ENCODE measurements at regions of chr10 and their contacts with region 1.

Region 1: DNA sequence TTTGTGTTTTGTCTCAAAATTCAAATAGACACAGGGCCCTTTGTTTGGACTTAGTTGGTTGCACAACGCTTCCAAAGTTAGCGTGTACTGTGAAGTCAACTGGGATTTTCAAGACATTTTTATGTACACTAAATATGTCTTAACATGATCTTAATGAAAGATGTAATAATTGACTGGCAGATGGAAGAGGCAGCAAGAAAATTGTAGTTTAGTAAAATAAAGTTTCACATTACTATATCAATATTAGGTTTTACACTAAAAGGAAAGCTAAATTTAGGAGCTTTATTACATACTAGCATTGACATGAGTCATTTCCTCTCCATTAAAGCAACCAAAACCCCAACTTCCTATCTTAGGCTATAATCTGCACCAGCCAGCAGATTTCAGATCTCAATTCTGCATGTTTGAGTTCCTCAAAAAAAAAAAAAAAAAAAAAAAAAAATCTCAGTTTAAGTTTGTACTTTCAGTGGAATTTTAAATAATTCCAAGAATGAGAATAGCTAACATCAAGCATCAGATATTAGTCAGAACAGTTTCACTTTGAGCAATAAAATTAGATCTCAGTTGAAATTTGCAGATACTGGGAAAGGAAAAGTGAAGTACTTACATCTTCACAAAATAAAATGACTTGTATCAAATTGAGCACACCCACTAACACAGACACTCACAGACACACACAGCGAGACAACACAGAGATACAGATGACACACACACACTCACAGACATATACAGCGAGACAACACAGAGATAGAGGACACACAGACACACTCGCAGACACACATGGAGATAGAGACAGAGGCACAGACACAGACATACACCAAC is 346.6 kb upstream of the KLF6 start:
- DNase-seq: peak; percentile 86
- H3K4me3 ChIP-seq: peak overlapping the region in 1 of 3 experiments; percentile 47
- H3K27ac ChIP-seq: peak overlapping the region; percentile 92
- H3K4me1 ChIP-seq: peaks cover 48% of the 10 kb centered on the region
- H3K27me3 ChIP-seq: no peaks in the 10 kb centered on the region
- CTCF ChIP-seq: no peak
- POLR2A ChIP-seq: no peak

Region 2: DNA sequence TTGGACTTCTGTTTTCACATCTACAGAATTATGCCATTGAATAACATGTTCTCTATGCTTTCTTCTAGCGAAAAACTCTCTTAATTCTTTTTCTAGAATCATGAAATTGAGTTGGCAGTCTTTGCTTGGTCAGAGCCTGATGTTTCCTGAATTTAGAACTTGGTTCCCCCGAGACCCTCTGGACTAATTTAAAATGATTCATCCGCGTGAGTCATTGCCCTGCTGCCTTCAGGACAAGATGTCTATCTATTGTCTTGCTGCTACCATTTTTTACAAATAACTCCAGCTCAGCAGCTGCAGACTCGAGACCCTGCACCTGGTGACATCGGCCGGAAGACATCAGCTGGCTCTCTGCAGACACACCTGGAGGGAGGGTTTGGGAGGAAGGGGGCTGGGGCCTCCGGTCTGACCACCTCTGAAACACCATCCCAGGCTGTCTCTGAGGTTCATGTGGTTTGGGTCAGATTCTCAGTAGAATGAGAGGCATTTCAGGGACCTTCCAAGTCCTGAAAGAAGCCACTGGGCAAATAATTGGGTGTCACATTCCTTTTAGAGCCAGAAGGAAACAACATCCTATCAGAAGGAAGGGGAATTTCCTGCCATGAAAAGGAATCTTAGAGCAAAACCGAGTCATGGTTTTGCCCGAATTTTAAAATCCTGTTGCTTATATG is 325.7 kb before region 1 on chr10:
- CTCF ChIA-PET with region 1: no interaction called
- POLR2A ChIA-PET with region 1: interaction called, 4 read pairs
- dilution Hi-C with region 1: no loop called
- intact Hi-C with region 1: loop called (anchors 1 kb)
- DNase-seq: peak; percentile 96
- H3K4me3 ChIP-seq: peak overlapping the region in 1 of 3 experiments; percentile 31
- H3K27ac ChIP-seq: peak overlapping the region; percentile 100
- H3K4me1 ChIP-seq: peaks cover 70% of the 10 kb centered on the region
- H3K27me3 ChIP-seq: no peaks in the 10 kb centered on the region
- CTCF ChIP-seq: no peak
- POLR2A ChIP-seq: peak; percentile 29

Region 3: DNA sequence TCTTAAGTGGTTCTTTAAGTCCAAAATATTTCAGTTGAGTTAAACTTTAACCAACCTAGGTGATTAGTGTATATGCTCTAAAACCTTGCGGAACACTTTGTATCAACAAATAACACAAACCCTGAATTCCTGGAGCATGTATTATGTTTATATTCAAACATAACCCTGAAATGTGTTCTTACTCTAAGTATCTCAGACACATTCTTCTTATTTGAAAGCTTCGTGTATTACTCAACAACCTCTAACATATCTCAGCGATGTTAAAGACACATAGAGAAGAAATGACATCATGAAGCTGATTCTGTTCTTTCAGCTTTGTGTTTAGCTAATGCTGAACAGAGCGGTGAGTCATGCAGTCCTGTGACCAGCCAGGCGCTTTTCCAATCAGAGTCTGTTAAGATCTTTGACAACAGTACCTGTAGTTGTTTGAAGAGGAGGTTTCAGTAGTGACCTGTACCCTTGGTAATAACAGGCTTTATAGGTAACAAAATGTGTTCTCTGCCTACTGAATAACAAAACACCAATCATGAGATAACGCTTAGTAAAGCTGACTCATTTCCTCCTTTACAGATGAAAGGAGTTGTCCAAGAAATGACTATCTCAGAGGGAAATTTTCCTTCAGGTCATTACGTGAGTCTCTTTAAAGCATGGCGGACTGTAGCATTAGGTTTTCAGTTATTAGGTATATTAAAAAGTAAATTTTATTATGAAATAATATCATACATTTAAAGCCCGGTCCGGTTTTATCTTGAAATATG is 279.3 kb before region 1 on chr10:
- CTCF ChIA-PET with region 1: no interaction called
- POLR2A ChIA-PET with region 1: no interaction called
- dilution Hi-C with region 1: no loop called
- intact Hi-C with region 1: loop called (anchors 5 kb)
- DNase-seq: peak; percentile 98
- H3K4me3 ChIP-seq: no peak overlapping the region
- H3K27ac ChIP-seq: peak overlapping the region; percentile 93
- H3K4me1 ChIP-seq: peaks cover 23% of the 10 kb centered on the region
- H3K27me3 ChIP-seq: no peaks in the 10 kb centered on the region
- CTCF ChIP-seq: no peak
- POLR2A ChIP-seq: no peak

Region 4: DNA sequence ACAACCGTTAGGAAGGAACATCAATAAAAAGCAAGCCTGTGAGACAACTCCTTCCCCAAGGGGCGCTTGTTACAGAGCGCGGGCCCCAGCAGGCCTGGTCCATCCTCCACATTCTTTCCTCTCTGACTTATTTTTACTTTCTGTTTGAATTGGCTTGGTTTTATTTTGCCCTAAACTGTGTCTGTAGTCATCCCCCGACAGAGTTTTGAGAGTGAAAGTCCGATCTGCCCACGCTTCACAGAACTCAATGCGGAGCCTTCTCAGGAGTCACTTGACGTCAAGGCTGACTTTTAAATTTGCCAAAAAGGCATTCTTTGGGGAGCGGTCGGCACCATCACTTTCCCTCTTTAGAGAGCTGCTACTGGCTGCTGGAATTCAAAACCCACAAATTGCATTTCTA is 196.5 kb before region 1 on chr10:
- CTCF ChIA-PET with region 1: no interaction called
- POLR2A ChIA-PET with region 1: no interaction called
- dilution Hi-C with region 1: no loop called
- intact Hi-C with region 1: loop called (anchors 5 kb)
- DNase-seq: peak; percentile 26
- H3K4me3 ChIP-seq: no peak overlapping the region
- H3K27ac ChIP-seq: peak overlapping the region; percentile 75
- H3K4me1 ChIP-seq: peaks cover 24% of the 10 kb centered on the region
- H3K27me3 ChIP-seq: no peaks in the 10 kb centered on the region
- CTCF ChIP-seq: no peak
- POLR2A ChIP-seq: no peak

Region 5: GRCh38 chr10:4081685-4082111 is 49.9 kb before region 1 on chr10:
- CTCF ChIA-PET with region 1: interaction called, 3 read pairs
- POLR2A ChIA-PET with region 1: no interaction called
- dilution Hi-C with region 1: no loop called
- intact Hi-C with region 1: loop called (anchors 1 kb)
- DNase-seq: no peak
- H3K4me3 ChIP-seq: no peak overlapping the region
- H3K27ac ChIP-seq: peak overlapping the region; percentile 35
- H3K4me1 ChIP-seq: peaks cover 20% of the 10 kb centered on the region
- H3K27me3 ChIP-seq: no peaks in the 10 kb centered on the region
- CTCF ChIP-seq: no peak
- POLR2A ChIP-seq: no peak

Region 6: DNA sequence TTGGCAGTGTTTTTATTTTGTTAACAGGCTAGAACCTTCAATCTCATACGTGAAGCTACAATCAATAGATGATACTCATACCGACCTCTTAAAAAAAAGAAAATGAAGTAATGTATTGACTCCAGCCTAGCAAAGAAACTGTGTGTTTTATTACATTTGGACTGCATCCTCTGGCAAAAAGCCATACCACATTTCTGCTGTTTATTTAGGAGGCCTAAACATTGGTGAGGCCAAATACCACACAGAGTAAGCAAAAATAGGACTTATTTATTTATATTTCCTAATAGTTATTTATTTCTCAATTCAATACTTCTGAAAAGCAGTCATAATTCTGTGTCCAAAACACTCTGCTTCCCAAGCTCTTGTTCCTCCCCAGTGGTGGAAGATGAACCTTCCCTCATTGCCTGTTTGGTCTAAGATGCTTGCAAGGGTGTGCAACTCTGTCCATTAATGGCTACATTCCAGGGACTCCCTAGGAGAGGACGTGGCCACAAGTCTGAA is 52.2 kb after region 1 on chr10:
- CTCF ChIA-PET with region 1: no interaction called
- POLR2A ChIA-PET with region 1: no interaction called
- dilution Hi-C with region 1: no loop called
- intact Hi-C with region 1: no loop called
- DNase-seq: peak; percentile 16
- H3K4me3 ChIP-seq: no peak overlapping the region
- H3K27ac ChIP-seq: no peak overlapping the region
- H3K4me1 ChIP-seq: no peaks in the 10 kb centered on the region
- H3K27me3 ChIP-seq: no peaks in the 10 kb centered on the region
- CTCF ChIP-seq: no peak
- POLR2A ChIP-seq: no peak

Region 7: DNA sequence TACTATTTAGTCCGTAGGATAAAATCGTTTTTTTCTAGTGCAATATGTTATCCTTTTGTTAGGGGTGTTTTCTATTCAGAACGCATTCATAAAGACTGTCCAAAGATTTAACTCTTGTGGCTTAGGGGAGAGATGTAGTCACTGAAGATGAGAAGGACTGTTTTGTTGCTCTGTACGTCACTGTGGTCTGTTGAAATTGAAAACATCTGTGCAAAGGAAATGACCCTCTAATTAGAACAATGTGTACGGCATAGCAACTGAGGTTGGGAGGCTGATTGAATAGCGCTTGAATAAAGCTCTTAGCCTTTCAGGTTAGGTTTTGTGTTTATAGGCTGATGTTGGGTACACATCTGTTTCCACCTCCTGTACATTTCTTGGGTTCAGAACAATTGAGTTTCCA is 241.0 kb after region 1 on chr10:
- CTCF ChIA-PET with region 1: no interaction called
- POLR2A ChIA-PET with region 1: no interaction called
- dilution Hi-C with region 1: no loop called
- intact Hi-C with region 1: loop called (anchors 1 kb)
- DNase-seq: peak; percentile 93
- H3K4me3 ChIP-seq: no peak overlapping the region
- H3K27ac ChIP-seq: peak overlapping the region; percentile 91
- H3K4me1 ChIP-seq: peaks cover 14% of the 10 kb centered on the region
- H3K27me3 ChIP-seq: no peaks in the 10 kb centered on the region
- CTCF ChIP-seq: no peak
- POLR2A ChIP-seq: no peak

Region 8: DNA sequence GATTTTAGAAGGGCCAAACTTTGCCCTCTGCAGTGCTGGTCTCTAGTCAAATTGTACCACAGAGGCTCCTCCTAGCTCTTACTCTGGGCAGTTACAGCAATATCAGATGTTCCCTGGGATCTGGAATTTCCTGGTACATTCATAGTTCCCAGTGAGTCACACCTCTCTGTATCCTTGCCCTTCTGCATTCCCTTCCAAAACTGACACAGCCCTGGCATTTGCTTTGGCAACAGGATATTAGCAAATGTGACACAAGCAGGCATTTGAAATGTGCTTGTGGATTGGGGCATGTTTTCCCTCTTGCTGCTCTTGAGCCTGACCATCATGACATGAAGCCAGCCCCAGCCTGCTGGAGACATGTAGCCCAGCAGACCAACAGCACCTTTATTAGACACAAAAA is 409.7 kb after region 1 on chr10:
- CTCF ChIA-PET with region 1: no interaction called
- POLR2A ChIA-PET with region 1: no interaction called
- dilution Hi-C with region 1: no loop called
- intact Hi-C with region 1: loop called (anchors 1 kb)
- DNase-seq: peak; percentile 94
- H3K4me3 ChIP-seq: no peak overlapping the region
- H3K27ac ChIP-seq: peak overlapping the region; percentile 93
- H3K4me1 ChIP-seq: peaks cover 10% of the 10 kb centered on the region
- H3K27me3 ChIP-seq: no peaks in the 10 kb centered on the region
- CTCF ChIP-seq: peak in 1 of 2 donors; percentile 18
- POLR2A ChIP-seq: no peak

Measured in endothelial cell of umbilical vein (primary cell).